K562 (cell line): ENCODE measurements at regions of chr7 and their contacts with region 1.

Region 1: DNA sequence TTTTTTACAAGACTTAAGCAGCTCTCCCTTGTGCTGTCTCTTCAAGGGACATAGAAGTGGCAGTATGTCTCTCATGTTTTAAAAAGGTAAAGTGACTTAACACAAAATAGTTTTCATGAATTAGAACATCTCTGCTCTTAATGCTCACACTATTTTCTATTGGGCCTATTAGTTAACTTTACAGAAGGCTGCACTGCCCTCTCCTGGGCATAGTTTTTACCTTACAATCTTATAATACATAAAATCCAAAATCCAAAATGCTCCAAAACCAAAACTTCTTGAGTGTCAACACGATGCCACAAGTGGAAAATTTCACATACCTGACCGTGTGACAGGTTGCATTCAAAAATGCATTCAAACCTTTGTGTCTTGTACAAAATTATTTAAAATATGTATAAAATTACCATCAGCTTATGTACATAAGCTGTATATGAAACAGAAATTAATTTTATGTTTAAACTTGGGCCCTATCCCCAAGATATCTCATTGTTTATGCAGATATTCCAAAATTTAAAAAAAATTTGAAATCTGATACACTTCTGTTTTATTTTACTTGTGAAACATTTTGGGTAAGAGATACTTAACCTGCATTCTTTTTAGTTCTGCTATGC is 25.8 kb downstream of the TES start:
- DNase-seq: peak; percentile 40 to 70 (median 42)
- ATAC-seq: peak; percentile 59
- H3K4me3 ChIP-seq: no peak overlapping the region
- H3K27ac ChIP-seq: no peak overlapping the region
- H3K4me1 ChIP-seq: peaks cover 3 to 13% of the 10 kb centered on the region in 2 experiments; a peak in 4 of 5 replicates
- H3K27me3 ChIP-seq: no peaks in the 10 kb centered on the region
- CTCF ChIP-seq: peak; percentile 46 to 81 (median 64); a peak in 5 of 6 replicates
- EP300 ChIP-seq: no peak
- POLR2A ChIP-seq: no peak
- RAD21 ChIP-seq: peak; percentile 82 to 86

Region 2: DNA sequence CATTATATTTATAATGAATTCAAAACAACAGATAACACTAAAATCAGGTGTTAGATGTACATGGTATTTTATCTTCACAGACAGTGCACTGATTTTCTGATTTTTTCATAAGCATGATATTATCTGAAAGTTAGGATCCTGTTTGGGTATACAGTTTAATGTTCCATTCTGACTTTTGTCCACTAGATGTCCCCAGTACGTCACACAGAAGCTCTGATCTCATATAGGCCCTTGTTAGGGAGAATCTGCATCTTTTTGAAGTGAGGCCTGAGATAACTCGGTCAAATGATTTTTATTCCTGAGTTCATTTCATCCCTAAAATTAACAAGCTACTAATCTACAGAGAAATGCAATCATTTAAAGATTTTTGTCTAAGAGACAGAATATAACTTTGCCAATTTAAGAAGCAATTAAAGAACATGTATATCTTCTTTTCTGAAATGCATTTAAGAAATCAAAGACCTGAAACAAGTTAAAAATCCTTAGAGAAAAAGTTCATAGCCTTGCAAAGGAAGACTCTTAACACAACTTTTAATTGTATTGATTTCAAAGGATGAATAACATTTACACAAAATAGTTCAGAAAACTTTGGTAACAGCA is 97.8 kb before region 1 on chr7:
- CTCF ChIA-PET with region 1: interaction called, 10 read pairs
- POLR2A ChIA-PET with region 1: no interaction called
- in situ Hi-C with region 1: no loop called
- intact Hi-C with region 1: no loop called
- DNase-seq: peak; percentile 52 to 70 (median 58)
- ATAC-seq: peak; percentile 97
- H3K4me3 ChIP-seq: no peak overlapping the region
- H3K27ac ChIP-seq: no peak overlapping the region
- H3K4me1 ChIP-seq: no peaks in the 10 kb centered on the region
- H3K27me3 ChIP-seq: no peaks in the 10 kb centered on the region
- CTCF ChIP-seq: peak; percentile 61 to 84 (median 76)
- EP300 ChIP-seq: no peak
- POLR2A ChIP-seq: no peak
- RAD21 ChIP-seq: peak; percentile 83 to 86